ENCODE measurements at regions of chr1 and their contacts with region 1.

Region 1: DNA sequence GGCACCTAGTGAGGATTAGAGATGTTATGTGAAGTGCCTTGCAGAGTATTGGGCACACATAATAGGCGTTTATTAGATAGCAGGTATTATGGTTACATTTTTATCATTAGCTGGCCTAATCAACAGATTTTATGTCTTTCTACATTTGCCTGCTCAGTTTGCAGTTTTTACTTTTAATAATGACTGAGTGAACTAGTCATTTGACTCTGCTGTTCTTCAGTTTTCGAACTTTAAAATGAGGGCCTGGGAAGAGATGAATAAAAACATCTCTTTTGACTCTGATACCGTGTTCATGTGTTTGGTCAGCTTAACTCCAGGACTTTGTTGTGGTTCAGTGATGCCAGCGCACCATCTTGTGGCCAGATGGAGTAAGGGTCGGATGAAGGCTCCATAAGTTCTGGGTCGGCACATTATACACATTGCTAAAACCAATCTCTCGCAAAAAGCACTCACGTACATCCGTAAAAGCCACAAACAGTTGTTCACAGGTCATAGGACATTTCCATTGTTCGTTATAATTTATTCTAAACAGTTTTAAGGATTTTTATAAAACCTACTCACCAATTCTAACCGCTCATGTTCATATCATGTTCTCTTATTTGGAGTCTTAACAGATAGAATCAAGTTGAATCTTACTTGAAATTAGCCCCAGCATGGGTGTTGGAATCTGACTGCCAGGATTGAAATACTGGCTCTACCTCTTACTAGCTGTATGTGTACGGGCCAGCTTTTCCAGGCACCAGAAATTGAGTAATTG is 78.4 kb upstream of the GPR88 start:
- DNase-seq: peak; percentile 73
- ATAC-seq: peak; percentile 68
- H3K4me3 Mint-ChIP-seq: no peak overlapping the region
- H3K27ac Mint-ChIP-seq: no peak overlapping the region
- H3K4me1 Mint-ChIP-seq: peaks cover 44% of the 10 kb centered on the region
- H3K27me3 Mint-ChIP-seq: peaks cover 17% of the 10 kb centered on the region
- CTCF ChIP-seq: peak; percentile 51

Region 2: GRCh38 chr1:100087396-100087795 is 372.1 kb before region 1 on chr1:
- CTCF ChIA-PET with region 1: interaction called, 10 read pairs
- POLR2A ChIA-PET with region 1: no interaction called
- DNase-seq: no peak
- ATAC-seq: no peak
- H3K4me3 Mint-ChIP-seq: no peak overlapping the region
- H3K27ac Mint-ChIP-seq: no peak overlapping the region
- H3K4me1 Mint-ChIP-seq: no peaks in the 10 kb centered on the region
- H3K27me3 Mint-ChIP-seq: no peaks in the 10 kb centered on the region
- CTCF ChIP-seq: no peak

Region 3: DNA sequence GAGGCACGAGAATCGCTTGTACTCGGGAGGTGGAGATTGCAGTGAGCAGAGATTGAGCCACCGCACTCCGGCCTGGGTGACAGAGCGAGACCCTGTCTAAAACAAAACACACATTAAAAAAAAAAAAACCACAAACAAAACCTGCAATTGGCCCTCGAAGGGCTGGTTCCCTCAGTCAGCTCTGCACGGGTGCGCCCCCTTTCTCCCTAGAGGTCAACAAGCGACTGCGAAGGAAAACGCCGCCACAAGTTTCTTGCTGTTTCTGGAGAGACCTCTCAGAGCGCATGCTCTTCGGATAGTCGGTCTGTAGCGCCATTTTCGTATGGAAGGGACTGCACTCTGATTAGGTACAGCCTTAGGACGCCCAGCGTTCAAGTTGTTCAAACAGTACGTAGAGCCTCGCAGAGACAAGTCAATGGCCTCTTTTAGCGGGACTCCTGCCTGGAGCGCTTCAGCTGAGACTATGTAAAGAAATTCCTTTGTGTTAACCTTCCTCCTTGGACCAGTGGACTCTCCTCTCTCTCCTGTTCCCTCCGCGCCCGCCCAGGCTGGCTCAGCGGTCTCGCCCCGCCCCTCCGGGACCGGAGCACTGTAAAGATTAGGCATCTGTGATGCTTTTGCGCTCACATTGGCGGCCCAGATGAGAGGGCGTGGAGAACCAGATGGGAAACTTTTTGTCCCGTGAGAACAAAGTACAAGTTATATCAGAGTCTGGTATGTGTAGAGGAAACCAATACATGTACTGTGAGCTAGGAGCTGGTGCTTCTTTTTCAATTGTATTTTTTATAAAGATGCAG is 108.2 kb before region 1 on chr1:
- CTCF ChIA-PET with region 1: interaction called, 17 read pairs
- POLR2A ChIA-PET with region 1: interaction called, 4 read pairs
- DNase-seq: peak; percentile 94
- ATAC-seq: peak; percentile 71
- H3K4me3 Mint-ChIP-seq: peak overlapping the region; percentile 98
- H3K27ac Mint-ChIP-seq: peak overlapping the region; percentile 100
- H3K4me1 Mint-ChIP-seq: peaks cover 28% of the 10 kb centered on the region
- H3K27me3 Mint-ChIP-seq: no peaks in the 10 kb centered on the region; the same call in 1 of the 2 replicates
- CTCF ChIP-seq: no peak

Region 4: GRCh38 chr1:100440075-100440809 is 19.3 kb before region 1 on chr1:
- CTCF ChIA-PET with region 1: interaction called, 11 read pairs
- POLR2A ChIA-PET with region 1: no interaction called
- DNase-seq: no peak
- ATAC-seq: peak; percentile 52; the same call in 1 of the 2 replicates
- H3K4me3 Mint-ChIP-seq: no peak overlapping the region
- H3K27ac Mint-ChIP-seq: peak overlapping the region; percentile 34; the same call in 1 of the 2 replicates
- H3K4me1 Mint-ChIP-seq: peaks cover 34% of the 10 kb centered on the region
- H3K27me3 Mint-ChIP-seq: no peaks in the 10 kb centered on the region
- CTCF ChIP-seq: no peak

Region 5: DNA sequence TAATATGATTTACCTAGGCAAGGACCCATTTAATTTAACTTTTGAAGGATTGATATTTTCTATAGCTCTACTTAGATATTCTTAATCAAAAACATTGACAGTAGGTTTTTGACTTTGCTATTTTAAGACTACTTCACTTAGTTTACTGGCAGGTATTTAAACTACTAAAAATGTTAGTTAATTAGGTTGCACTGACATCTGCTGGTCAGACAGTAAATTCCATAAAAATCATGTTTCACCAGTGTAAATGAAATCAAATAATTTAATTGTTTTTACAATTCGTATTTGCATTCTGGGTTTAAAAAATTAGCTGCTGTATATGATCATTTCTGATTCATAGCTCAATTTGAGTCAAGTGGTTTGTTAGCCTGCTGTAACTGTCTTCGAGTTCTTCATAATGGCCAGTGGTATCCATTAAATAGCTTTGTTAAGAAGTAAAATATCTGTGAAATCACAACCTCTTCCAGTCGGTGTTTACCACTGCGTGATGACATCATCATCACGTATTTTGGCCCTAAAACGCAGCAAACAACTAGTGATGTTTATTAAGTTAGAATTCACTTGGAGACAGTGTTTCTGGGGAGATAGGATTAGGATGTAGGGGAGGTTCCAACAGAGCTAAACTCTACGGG is 408.9 kb after region 1 on chr1:
- CTCF ChIA-PET with region 1: interaction called, 22 read pairs
- POLR2A ChIA-PET with region 1: no interaction called
- DNase-seq: no peak
- ATAC-seq: no peak
- H3K4me3 Mint-ChIP-seq: no peak overlapping the region
- H3K27ac Mint-ChIP-seq: no peak overlapping the region
- H3K4me1 Mint-ChIP-seq: peaks cover 7% of the 10 kb centered on the region; the same call in 1 of the 2 replicates
- H3K27me3 Mint-ChIP-seq: no peaks in the 10 kb centered on the region
- CTCF ChIP-seq: 0 out of 2 replicates have a peak, but pooled peaks have one; percentile 18

Measured in WTC11 (cell line).